Activated CD4-positive, alpha-beta memory T cell treated with anti-CD3 and anti-CD28 coated beads, Interleukin-2, amount 10 ng/mL, durations not matched to agents 7 days and 5 days (primary cell): ENCODE measurements at regions of chr19 and their contacts with region 1.

Region 1: GRCh38 chr19:53792721-53793433 is 31.2 kb downstream of the NLRP12 start:
- DNase-seq: peak; percentile 82
- H3K4me3 Mint-ChIP-seq: no peak overlapping the region
- H3K27ac Mint-ChIP-seq: no peak overlapping the region
- H3K4me1 Mint-ChIP-seq: no peaks in the 10 kb centered on the region
- H3K27me3 Mint-ChIP-seq: no peaks in the 10 kb centered on the region

Region 2: DNA sequence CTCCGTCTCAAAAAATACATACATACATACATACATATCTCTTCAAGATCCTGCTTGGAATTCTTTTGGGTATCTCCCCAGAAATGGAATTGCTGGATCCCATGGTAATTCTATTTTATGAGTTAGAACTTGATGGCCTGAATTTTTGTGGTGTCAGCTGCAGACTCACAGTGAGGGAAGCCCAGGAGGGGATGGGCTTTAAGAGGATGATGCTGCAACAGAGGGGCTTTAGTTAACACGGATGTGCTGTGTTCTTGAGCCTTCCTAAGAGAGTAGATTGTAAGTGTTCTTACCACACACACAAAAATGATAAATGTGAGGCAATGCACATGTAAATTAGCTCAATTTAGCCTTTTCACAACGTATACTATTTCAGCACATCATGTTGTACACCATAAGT is 230.3 kb after region 1 on chr19:
- CTCF ChIA-PET with region 1: interaction called, 18 read pairs
- POLR2A ChIA-PET with region 1: no interaction called
- DNase-seq: no peak
- H3K4me3 Mint-ChIP-seq: no peak overlapping the region
- H3K27ac Mint-ChIP-seq: no peak overlapping the region
- H3K4me1 Mint-ChIP-seq: peaks cover 35% of the 10 kb centered on the region
- H3K27me3 Mint-ChIP-seq: peaks cover 6% of the 10 kb centered on the region

Region 3: DNA sequence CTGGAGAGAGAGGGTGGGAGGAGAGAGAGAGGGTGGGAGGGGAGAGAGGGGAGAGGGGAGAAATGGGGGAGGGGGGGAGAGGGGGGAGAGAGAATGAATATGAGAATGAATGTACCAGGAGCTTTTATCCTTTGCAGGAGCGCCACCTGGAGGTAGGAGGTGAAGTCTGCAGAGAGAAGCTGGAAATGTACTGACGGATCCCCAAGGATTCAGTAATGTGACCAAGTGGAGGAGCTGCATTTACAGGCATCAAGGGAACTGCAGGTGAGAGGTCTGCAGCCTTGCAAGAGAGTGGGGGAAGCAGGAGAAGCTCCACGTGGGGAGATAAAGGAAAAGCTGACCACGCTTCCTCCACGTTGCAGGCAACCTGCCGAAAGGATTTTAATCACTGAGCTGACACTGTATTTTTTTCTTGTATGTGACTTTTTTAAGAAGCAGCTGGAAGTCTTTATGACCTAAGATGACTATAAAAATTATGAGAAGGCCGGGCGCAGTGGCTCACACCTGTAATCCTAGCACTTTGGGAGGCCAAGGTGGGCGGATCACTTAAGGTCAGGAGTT is 237.1 kb after region 1 on chr19:
- CTCF ChIA-PET with region 1: interaction called, 25 read pairs
- POLR2A ChIA-PET with region 1: no interaction called
- DNase-seq: peak; percentile 65
- H3K4me3 Mint-ChIP-seq: no peak overlapping the region
- H3K27ac Mint-ChIP-seq: no peak overlapping the region
- H3K4me1 Mint-ChIP-seq: no peaks in the 10 kb centered on the region
- H3K27me3 Mint-ChIP-seq: peaks cover 17% of the 10 kb centered on the region